MCF 10A (cell line): ENCODE measurements at regions of chr9 and their contacts with region 1.

Region 1: GRCh38 chr9:125374443-125375309 is 113.0 kb downstream of the GAPVD1 start:
- DNase-seq: peak; percentile 83
- H3K4me3 Mint-ChIP-seq: peak overlapping the region; percentile 56
- H3K27ac Mint-ChIP-seq: no peak overlapping the region
- H3K4me1 Mint-ChIP-seq: peaks cover 12% of the 10 kb centered on the region
- H3K27me3 Mint-ChIP-seq: no peaks in the 10 kb centered on the region
- CTCF ChIP-seq: peak; percentile 82

Region 2: DNA sequence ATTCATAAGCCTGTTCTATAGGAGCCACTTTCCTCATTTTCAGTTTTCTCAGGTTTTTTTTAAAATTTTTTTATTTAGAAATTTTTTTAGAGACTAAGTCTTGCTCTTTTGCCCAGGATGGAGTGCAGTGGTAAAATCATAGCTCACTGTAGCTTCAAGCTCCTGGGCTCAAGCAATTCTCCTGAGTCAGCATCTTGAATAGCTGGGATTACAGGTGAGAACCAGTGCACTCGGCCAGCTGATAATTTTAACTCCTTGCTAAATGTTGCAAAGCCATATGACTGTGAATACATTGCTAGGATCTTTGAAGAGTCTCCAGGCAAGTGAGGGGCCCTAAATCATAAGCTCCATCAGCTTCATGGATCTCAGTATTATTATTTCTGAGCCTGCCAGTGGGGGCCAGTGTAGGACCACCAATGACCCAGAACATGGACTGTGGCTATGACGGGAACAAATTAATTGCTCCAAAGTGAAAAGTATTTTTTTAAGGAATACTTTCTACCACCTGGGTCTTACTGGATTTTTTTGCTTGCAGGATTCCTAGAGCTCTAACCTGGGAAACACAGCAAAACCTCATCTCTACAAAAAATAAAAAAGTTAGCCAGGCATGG is 118.8 kb before region 1 on chr9:
- CTCF ChIA-PET with region 1: interaction called, 3 read pairs
- POLR2A ChIA-PET with region 1: no interaction called
- intact Hi-C with region 1: loop called (anchors 1 kb)
- DNase-seq: peak; percentile 37
- H3K4me3 Mint-ChIP-seq: no peak overlapping the region
- H3K27ac Mint-ChIP-seq: no peak overlapping the region
- H3K4me1 Mint-ChIP-seq: peaks cover 3% of the 10 kb centered on the region
- H3K27me3 Mint-ChIP-seq: no peaks in the 10 kb centered on the region
- CTCF ChIP-seq: peak; percentile 23